ENCODE measurements at regions of chr14 and their contacts with region 1.

Region 1: GRCh38 chr14:39680776-39681175 is 248.5 kb upstream of the FBXO33 start:
- DNase-seq: no peak
- H3K4me3 Mint-ChIP-seq: no peak overlapping the region
- H3K27ac Mint-ChIP-seq: no peak overlapping the region
- H3K4me1 Mint-ChIP-seq: peaks cover 27% of the 10 kb centered on the region
- H3K27me3 Mint-ChIP-seq: no peaks in the 10 kb centered on the region

Region 2: DNA sequence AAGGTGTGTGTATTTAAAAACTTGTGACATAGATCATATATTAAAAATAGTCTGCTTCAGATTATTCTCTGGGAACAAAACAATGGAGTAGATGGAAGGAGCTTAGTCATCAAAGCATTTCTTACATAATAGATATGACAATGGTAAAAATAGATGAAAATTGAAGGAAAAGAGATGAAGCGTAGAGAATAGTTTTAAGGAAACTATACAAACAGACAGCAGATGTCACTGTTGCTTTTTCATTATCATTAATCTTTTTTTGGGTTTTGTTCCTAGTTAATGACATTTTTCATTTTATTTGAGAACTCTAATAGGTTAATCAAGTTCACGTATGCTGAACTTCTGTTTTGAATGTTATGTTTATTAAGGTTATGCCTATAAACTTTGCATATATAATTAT is 99.3 kb before region 1 on chr14:
- CTCF ChIA-PET with region 1: no interaction called
- intact Hi-C with region 1: loop called (anchors 5 kb)
- DNase-seq: no peak
- H3K4me3 Mint-ChIP-seq: no peak overlapping the region
- H3K27ac Mint-ChIP-seq: no peak overlapping the region
- H3K4me1 Mint-ChIP-seq: no peaks in the 10 kb centered on the region
- H3K27me3 Mint-ChIP-seq: no peaks in the 10 kb centered on the region